Naive thymus-derived CD4-positive, alpha-beta T cell (primary cell): ENCODE measurements at regions of chr2 and their contacts with region 1.

Region 1: DNA sequence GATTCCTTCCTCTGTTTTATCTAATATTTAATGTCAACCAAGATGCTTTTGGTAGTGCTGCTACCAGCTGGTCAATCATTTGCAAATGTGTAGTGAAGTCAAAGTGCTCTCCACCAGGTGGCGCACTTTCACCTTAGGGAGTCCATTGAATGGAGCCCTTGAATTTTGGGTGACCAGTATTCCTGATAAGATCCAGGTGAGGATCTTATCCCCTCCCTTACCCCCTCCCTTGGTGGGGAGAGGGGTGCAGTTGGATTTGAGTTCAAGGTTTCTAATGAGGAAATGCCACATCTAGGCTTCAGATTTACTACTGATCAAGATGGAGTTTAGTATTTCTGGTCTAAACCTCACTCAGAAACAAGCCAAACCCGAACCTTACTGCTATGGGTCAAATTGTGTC is 12.0 kb upstream of the E2F6 start:
- DNase-seq: peak; percentile 44 to 79 (median 63)
- ATAC-seq: peak; percentile 77
- H3K4me3 ChIP-seq: no peak overlapping the region
- H3K4me3 Mint-ChIP-seq: no peak overlapping the region
- H3K27ac ChIP-seq: no peak overlapping the region
- H3K27ac Mint-ChIP-seq: no peak overlapping the region
- H3K4me1 ChIP-seq: no peaks in the 10 kb centered on the region
- H3K4me1 Mint-ChIP-seq: peaks cover 0 to 8% (median 6%) of the 10 kb centered on the region in 7 donors
- H3K27me3 ChIP-seq: no peaks in the 10 kb centered on the region
- H3K27me3 Mint-ChIP-seq: peaks cover 28 to 39% (median 32%) of the 10 kb centered on the region in 5 donors

Region 2: GRCh38 chr2:10733575-10733943 is 744.4 kb before region 1 on chr2:
- CTCF ChIA-PET with region 1: no interaction called
- POLR2A ChIA-PET with region 1: no interaction called
- intact Hi-C with region 1: no loop called
- DNase-seq: no peak
- ATAC-seq: no peak
- H3K4me3 ChIP-seq: no peak overlapping the region
- H3K4me3 Mint-ChIP-seq: no peak overlapping the region
- H3K27ac ChIP-seq: no peak overlapping the region
- H3K27ac Mint-ChIP-seq: peak overlapping the region in 1 of 9 donors; percentile 12
- H3K4me1 ChIP-seq: no peaks in the 10 kb centered on the region
- H3K4me1 Mint-ChIP-seq: peaks cover 0 to 2% (median 0%) of the 10 kb centered on the region in 7 donors
- H3K27me3 ChIP-seq: no peaks in the 10 kb centered on the region
- H3K27me3 Mint-ChIP-seq: peaks cover 0 to 15% (median 6%) of the 10 kb centered on the region in 5 donors

Region 3: GRCh38 chr2:11417946-11418585 is 59.9 kb before region 1 on chr2:
- CTCF ChIA-PET with region 1: no interaction called
- POLR2A ChIA-PET with region 1: no interaction called
- intact Hi-C with region 1: no loop called
- DNase-seq: no peak
- ATAC-seq: no peak
- H3K4me3 ChIP-seq: no peak overlapping the region
- H3K4me3 Mint-ChIP-seq: no peak overlapping the region
- H3K27ac ChIP-seq: no peak overlapping the region
- H3K27ac Mint-ChIP-seq: no peak overlapping the region
- H3K4me1 ChIP-seq: no peaks in the 10 kb centered on the region
- H3K4me1 Mint-ChIP-seq: no peaks in the 10 kb centered on the region
- H3K27me3 ChIP-seq: no peaks in the 10 kb centered on the region
- H3K27me3 Mint-ChIP-seq: peaks cover 0 to 17% (median 6%) of the 10 kb centered on the region in 5 donors

Region 4: DNA sequence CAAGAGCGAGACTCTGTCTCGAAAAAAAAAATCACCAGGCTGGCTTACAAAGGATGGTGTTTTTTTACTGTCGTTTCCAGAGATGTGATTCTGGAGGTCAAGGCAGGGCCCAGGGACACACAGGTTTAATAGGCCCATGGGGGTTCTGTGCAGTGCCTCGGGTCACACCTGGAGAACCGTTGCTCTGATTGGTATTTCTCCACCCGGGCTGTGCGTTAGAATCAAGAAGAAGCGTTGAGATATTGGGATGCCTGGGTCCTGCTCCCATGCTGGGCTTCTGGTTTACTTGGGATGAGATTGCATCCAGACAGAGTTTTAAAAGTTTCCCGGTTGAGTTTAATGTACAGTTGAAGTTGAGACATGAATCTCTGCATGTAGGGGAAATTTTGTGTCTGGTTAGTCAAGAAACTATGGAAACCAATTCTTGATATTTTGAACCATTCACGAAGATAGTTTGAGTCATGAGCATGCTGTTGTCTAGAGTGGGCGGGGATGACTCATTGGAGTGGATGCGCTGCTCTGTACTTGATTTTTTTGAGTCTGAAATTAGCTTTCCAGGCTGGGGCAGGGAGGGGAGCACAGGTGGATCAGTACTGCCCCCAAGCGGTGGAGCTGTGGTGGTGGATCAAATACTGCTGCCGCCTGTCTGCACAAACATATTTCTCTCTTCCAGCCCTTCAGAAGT is 106.0 kb after region 1 on chr2:
- CTCF ChIA-PET with region 1: interaction called, 5 read pairs
- POLR2A ChIA-PET with region 1: no interaction called
- intact Hi-C with region 1: loop called (anchors 1 kb)
- DNase-seq: peak; percentile 12 to 86 (median 34)
- ATAC-seq: peak; percentile 79
- H3K4me3 ChIP-seq: no peak overlapping the region
- H3K4me3 Mint-ChIP-seq: no peak overlapping the region
- H3K27ac ChIP-seq: no peak overlapping the region
- H3K27ac Mint-ChIP-seq: no peak overlapping the region
- H3K4me1 ChIP-seq: no peaks in the 10 kb centered on the region
- H3K4me1 Mint-ChIP-seq: peaks cover 0 to 7% (median 3%) of the 10 kb centered on the region in 7 donors
- H3K27me3 ChIP-seq: peaks cover 0 to 3% of the 10 kb centered on the region in 2 donors
- H3K27me3 Mint-ChIP-seq: peaks cover 0 to 4% (median 0%) of the 10 kb centered on the region in 5 donors

Region 5: GRCh38 chr2:11681722-11682589 is 204.0 kb after region 1 on chr2:
- CTCF ChIA-PET with region 1: interaction called, 3 read pairs
- POLR2A ChIA-PET with region 1: no interaction called
- intact Hi-C with region 1: loop called in 1 of 2 experiments (anchors 1 kb)
- DNase-seq: peak; percentile 24 to 64 (median 41)
- ATAC-seq: peak; percentile 73
- H3K4me3 ChIP-seq: no peak overlapping the region
- H3K4me3 Mint-ChIP-seq: no peak overlapping the region
- H3K27ac ChIP-seq: no peak overlapping the region
- H3K27ac Mint-ChIP-seq: no peak overlapping the region
- H3K4me1 ChIP-seq: no peaks in the 10 kb centered on the region
- H3K4me1 Mint-ChIP-seq: peaks cover 0 to 8% (median 3%) of the 10 kb centered on the region in 7 donors
- H3K27me3 ChIP-seq: no peaks in the 10 kb centered on the region
- H3K27me3 Mint-ChIP-seq: peaks cover 4 to 58% (median 10%) of the 10 kb centered on the region in 5 donors

Region 6: GRCh38 chr2:11891028-11891427 is 413.0 kb after region 1 on chr2:
- CTCF ChIA-PET with region 1: no interaction called
- POLR2A ChIA-PET with region 1: no interaction called
- intact Hi-C with region 1: no loop called
- DNase-seq: no peak
- ATAC-seq: no peak
- H3K4me3 ChIP-seq: no peak overlapping the region
- H3K4me3 Mint-ChIP-seq: no peak overlapping the region
- H3K27ac ChIP-seq: no peak overlapping the region
- H3K27ac Mint-ChIP-seq: no peak overlapping the region
- H3K4me1 ChIP-seq: no peaks in the 10 kb centered on the region
- H3K4me1 Mint-ChIP-seq: peaks cover 0 to 13% (median 3%) of the 10 kb centered on the region in 7 donors
- H3K27me3 ChIP-seq: no peaks in the 10 kb centered on the region
- H3K27me3 Mint-ChIP-seq: peaks cover 0 to 4% (median 0%) of the 10 kb centered on the region in 5 donors